MCF 10A (cell line): ENCODE measurements at regions of chr5 and their contacts with region 1.

Region 1: GRCh38 chr5:172764849-172765765 is 5.9 kb downstream of the DUSP1 start:
- DNase-seq: peak; percentile 100
- H3K4me3 Mint-ChIP-seq: peak overlapping the region; percentile 98
- H3K27ac Mint-ChIP-seq: peak overlapping the region; percentile 99
- H3K4me1 Mint-ChIP-seq: peaks cover 24% of the 10 kb centered on the region
- H3K27me3 Mint-ChIP-seq: no peaks in the 10 kb centered on the region
- CTCF ChIP-seq: no peak

Region 2: DNA sequence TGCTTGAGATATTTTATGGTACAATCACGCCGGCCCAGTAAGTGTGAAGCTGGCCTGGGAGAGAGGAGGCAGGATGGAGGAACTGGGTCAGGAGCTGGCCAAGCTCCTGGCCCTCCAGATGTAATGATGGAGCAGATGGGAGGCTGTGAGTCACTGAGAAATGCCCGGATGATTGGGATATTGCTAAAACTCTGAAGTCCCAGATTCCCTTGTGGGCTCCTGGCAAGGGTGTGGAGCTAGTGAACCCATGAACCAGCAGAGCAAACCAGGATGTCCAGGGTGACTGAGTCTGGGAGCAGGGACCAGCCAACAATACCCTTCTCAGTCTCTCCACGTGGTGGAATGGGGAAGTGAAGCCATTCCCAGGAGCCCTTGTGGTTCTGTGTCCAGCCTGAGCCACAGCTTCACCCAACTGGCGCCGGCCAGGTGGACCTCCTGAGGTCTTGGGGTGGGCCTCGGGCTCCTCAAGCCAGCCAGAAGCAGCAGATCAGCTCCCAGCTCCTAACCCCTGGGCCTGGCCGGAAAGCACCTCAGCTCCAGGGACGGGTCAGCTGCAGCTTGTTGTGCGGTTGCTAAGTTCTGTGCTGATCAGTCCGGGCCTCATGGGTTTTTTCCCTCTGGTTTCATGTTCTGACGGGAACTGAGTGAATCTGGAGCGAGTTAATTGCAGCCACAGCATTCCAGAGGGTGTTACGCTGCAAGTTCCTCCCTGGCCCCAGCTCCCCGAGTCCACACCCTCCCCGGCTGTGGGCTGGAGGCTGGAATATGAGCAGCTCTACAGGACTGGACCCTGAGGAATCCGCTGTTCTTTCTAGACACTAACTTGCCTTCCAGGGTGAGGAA is 31.8 kb before region 1 on chr5:
- CTCF ChIA-PET with region 1: interaction called, 35 read pairs
- POLR2A ChIA-PET with region 1: interaction called, 287 read pairs
- intact Hi-C with region 1: loop called (anchors 1 kb)
- DNase-seq: peak; percentile 93
- H3K4me3 Mint-ChIP-seq: peak overlapping the region; percentile 63
- H3K27ac Mint-ChIP-seq: peak overlapping the region; percentile 99
- H3K4me1 Mint-ChIP-seq: peaks cover 44% of the 10 kb centered on the region
- H3K27me3 Mint-ChIP-seq: no peaks in the 10 kb centered on the region
- CTCF ChIP-seq: peak; percentile 18

Region 3: GRCh38 chr5:172749881-172750633 is 15.1 kb before region 1 on chr5:
- CTCF ChIA-PET with region 1: interaction called, 5 read pairs
- POLR2A ChIA-PET with region 1: interaction called, 33 read pairs
- intact Hi-C with region 1: no loop called
- DNase-seq: no peak
- H3K4me3 Mint-ChIP-seq: no peak overlapping the region
- H3K27ac Mint-ChIP-seq: no peak overlapping the region
- H3K4me1 Mint-ChIP-seq: peaks cover 7% of the 10 kb centered on the region
- H3K27me3 Mint-ChIP-seq: no peaks in the 10 kb centered on the region
- CTCF ChIP-seq: no peak

Region 4: DNA sequence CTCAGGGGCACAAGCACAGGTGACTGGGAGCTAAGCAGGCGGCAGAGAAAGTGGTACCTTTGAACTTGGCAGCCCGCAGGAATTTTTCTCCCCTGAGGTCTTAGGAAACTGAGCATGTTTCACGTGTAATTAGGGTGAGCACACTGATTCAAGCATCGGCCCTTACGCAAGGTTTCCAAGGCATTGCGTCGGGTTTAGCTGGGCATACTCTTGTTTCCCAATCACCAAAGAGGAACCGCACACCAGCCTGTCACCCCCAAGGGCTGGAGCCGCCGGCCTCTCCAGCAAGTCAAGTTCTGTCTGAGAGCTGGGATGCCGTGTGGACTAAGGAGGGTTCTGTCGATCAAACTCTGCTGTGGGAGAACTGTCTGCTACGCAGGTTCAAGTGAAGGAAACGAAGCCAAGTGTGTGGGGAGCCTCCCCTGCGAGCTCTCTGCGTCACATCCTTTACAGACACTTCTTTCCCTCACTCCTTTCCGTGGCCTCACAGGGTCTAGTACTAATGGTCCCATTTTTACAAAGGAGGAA is 121.9 kb after region 1 on chr5:
- CTCF ChIA-PET with region 1: interaction called, 5 read pairs
- POLR2A ChIA-PET with region 1: interaction called, 74 read pairs
- intact Hi-C with region 1: no loop called
- DNase-seq: peak; percentile 100
- H3K4me3 Mint-ChIP-seq: peak overlapping the region; percentile 61
- H3K27ac Mint-ChIP-seq: peak overlapping the region; percentile 98
- H3K4me1 Mint-ChIP-seq: peaks cover 46% of the 10 kb centered on the region
- H3K27me3 Mint-ChIP-seq: no peaks in the 10 kb centered on the region
- CTCF ChIP-seq: no peak

Region 5: GRCh38 chr5:172920447-172920849 is 155.3 kb after region 1 on chr5:
- CTCF ChIA-PET with region 1: interaction called, 4 read pairs
- POLR2A ChIA-PET with region 1: interaction called, 16 read pairs
- intact Hi-C with region 1: no loop called
- DNase-seq: peak; percentile 95
- H3K4me3 Mint-ChIP-seq: no peak overlapping the region
- H3K27ac Mint-ChIP-seq: peak overlapping the region; percentile 89
- H3K4me1 Mint-ChIP-seq: peaks cover 26% of the 10 kb centered on the region
- H3K27me3 Mint-ChIP-seq: no peaks in the 10 kb centered on the region
- CTCF ChIP-seq: no peak

Region 6: DNA sequence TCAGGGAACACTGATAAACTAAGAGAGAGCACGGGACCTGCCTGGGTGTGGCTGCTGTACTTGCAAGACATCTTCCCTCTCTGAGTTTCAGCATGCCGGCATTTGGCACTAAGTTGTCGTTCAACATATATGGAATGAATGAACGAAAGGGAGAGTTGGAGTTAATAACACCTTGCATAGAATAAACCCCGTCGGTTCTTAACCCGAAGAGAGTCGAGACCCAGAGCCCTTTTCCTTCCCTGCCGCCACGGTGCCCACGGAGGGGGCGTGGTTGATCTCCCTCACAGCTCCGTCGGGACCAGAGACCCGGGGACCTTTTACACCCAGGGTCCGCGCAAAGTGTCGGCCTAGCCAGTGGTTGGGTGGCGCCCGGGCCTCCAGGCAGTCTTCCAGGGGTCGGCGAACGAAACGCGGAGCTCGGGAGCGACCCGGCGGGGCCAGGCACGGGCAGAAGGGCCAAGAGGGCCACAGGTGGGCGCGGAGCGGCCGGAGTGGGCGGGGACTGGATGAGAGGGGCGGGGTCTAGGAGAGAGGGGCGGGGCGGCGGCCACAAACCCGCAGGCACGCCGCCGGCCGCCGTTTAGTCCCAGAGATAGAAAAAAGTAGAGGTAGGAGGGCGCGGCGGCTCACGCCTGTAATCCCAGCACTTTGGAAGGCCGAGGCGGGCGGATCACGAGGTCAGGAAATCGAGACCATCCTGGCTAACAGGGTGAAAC is 193.4 kb after region 1 on chr5:
- CTCF ChIA-PET with region 1: interaction called, 3 read pairs
- POLR2A ChIA-PET with region 1: interaction called, 14 read pairs
- intact Hi-C with region 1: no loop called
- DNase-seq: peak; percentile 80
- H3K4me3 Mint-ChIP-seq: peak overlapping the region; percentile 94
- H3K27ac Mint-ChIP-seq: peak overlapping the region; percentile 98
- H3K4me1 Mint-ChIP-seq: peaks cover 49% of the 10 kb centered on the region
- H3K27me3 Mint-ChIP-seq: no peaks in the 10 kb centered on the region
- CTCF ChIP-seq: no peak